ENCODE measurements at regions of chr1 and their contacts with region 1.

Region 1: DNA sequence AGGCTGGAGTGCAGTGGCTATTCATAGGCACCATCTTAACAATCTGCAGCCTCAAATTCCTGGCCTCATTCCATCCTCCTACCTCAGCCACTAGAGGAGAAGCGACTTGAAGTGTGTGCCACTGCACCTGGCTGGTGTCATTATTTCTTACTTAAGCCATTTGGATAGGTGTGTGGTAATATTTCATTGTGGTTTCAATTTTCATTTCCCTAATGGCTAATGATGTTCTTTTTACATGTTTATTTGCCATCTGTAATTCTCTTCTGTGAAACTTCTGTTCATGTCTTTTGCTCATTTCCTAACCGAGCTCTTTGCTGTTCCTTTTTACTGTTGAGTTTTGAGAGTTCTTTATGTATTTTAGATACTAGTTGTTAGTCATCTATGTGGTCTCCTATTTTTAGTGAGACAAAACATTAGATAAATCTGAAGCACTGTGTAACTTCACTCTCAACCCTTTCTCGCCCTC is 66.8 kb downstream of the SLC27A3 start:
- DNase-seq: no peak
- ATAC-seq: no peak
- H3K4me3 ChIP-seq: no peak overlapping the region
- H3K4me3 Mint-ChIP-seq: no peak overlapping the region
- H3K27ac ChIP-seq: no peak overlapping the region
- H3K27ac Mint-ChIP-seq: peak overlapping the region; percentile 10 to 40
- H3K4me1 ChIP-seq: no peaks in the 10 kb centered on the region
- H3K4me1 Mint-ChIP-seq: peaks cover 12 to 32% (median 32%) of the 10 kb centered on the region in 3 donors
- H3K27me3 ChIP-seq: no peaks in the 10 kb centered on the region
- H3K27me3 Mint-ChIP-seq: no peaks in the 10 kb centered on the region

Region 2: GRCh38 chr1:153578471-153578870 is 263.6 kb before region 1 on chr1:
- CTCF ChIA-PET with region 1: no interaction called
- POLR2A ChIA-PET with region 1: interaction called in 1 of 2 experiments, 13 read pairs
- DNase-seq: no peak
- ATAC-seq: no peak
- H3K4me3 ChIP-seq: no peak overlapping the region
- H3K4me3 Mint-ChIP-seq: no peak overlapping the region
- H3K27ac ChIP-seq: no peak overlapping the region
- H3K27ac Mint-ChIP-seq: no peak overlapping the region
- H3K4me1 ChIP-seq: no peaks in the 10 kb centered on the region
- H3K4me1 Mint-ChIP-seq: no peaks in the 10 kb centered on the region
- H3K27me3 ChIP-seq: peaks cover 0 to 28% of the 10 kb centered on the region in 2 experiments
- H3K27me3 Mint-ChIP-seq: peaks cover 21 to 29% of the 10 kb centered on the region in 2 donors

Region 3: DNA sequence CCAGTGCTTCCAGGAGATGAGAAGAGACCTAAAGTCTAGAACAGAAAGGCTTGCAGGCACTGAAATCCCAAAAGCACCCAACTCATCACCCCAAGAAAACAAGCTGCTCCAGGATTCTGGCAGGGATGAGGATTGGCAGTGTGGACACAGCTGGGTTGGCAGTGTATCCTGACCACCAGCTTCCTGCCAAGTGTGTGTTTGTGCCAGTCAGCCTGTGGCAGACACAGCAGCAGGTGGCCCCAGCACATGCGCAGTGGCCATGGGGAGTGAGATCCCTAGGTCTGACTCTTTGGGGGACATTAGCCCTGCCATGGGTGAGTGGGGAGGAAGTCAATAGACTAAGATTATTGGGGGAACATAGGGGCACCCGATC is 192.2 kb before region 1 on chr1:
- CTCF ChIA-PET with region 1: no interaction called
- POLR2A ChIA-PET with region 1: no interaction called
- DNase-seq: peak in 3 of 35 experiments; percentile 20 to 25 (median 25)
- ATAC-seq: peak; percentile 26 to 60 (median 46)
- H3K4me3 ChIP-seq: peak overlapping the region; percentile 1 to 29
- H3K4me3 Mint-ChIP-seq: peak overlapping the region; percentile 43 to 68 (median 50)
- H3K27ac ChIP-seq: peak overlapping the region; percentile 63
- H3K27ac Mint-ChIP-seq: peak overlapping the region; percentile 95 to 96
- H3K4me1 ChIP-seq: peaks cover 25 to 46% of the 10 kb centered on the region in 2 experiments
- H3K4me1 Mint-ChIP-seq: peaks cover 43 to 52% (median 51%) of the 10 kb centered on the region in 3 donors
- H3K27me3 ChIP-seq: no peaks in the 10 kb centered on the region
- H3K27me3 Mint-ChIP-seq: no peaks in the 10 kb centered on the region

Region 4: DNA sequence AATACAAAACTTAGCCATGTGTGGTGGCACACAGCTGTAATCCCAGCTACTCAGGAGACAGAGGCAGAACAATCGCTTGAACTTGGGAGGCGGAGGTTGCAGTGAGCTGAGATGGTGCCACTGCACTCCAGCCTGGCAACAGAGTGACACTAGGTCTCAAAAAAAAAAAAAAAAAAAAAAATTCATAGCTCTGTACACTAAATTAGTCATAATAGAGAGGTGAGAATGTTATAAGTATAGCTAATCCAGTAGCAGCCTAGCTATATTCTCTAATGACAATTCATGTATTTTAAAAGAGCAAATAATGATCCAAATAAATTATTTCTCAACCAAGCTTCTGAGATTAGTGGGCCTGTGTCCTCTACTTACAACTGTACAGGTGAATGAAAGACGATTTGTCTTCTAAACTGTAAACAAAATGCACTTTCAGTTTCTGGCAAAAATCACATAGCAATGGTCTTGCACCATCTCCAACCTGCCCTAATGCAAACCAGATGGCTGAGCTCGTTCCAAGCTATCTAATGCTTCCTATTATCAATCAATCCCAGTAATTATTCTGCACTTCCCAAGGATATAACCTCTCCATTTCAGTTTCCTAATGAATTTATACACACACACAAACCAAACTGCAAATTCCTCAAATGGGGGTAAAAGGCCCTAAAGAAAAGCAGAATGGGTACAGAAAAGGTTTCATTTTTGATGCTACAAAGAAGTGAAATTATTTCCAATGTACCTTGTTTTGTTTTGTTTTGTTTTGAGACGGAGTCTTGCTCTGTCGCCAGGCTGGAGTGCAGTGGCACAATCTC is 24.2 kb after region 1 on chr1:
- CTCF ChIA-PET with region 1: no interaction called
- POLR2A ChIA-PET with region 1: interaction called in 1 of 2 experiments, 10 read pairs
- DNase-seq: no peak
- ATAC-seq: no peak
- H3K4me3 ChIP-seq: no peak overlapping the region
- H3K4me3 Mint-ChIP-seq: no peak overlapping the region
- H3K27ac ChIP-seq: no peak overlapping the region
- H3K27ac Mint-ChIP-seq: peak overlapping the region; percentile 32 to 68
- H3K4me1 ChIP-seq: peaks cover 4 to 20% of the 10 kb centered on the region in 2 experiments
- H3K4me1 Mint-ChIP-seq: peaks cover 35 to 46% (median 46%) of the 10 kb centered on the region in 3 donors
- H3K27me3 ChIP-seq: no peaks in the 10 kb centered on the region
- H3K27me3 Mint-ChIP-seq: no peaks in the 10 kb centered on the region

Region 5: GRCh38 chr1:153922076-153922971 is 80.3 kb after region 1 on chr1:
- CTCF ChIA-PET with region 1: no interaction called
- POLR2A ChIA-PET with region 1: no interaction called
- DNase-seq: peak in 22 of 35 experiments; percentile 8 to 59 (median 40)
- ATAC-seq: peak; percentile 0 to 37 (median 28)
- H3K4me3 ChIP-seq: peak overlapping the region; percentile 69 to 75
- H3K4me3 Mint-ChIP-seq: peak overlapping the region; percentile 91 to 96 (median 94)
- H3K27ac ChIP-seq: peak overlapping the region; percentile 68
- H3K27ac Mint-ChIP-seq: peak overlapping the region; percentile 95 to 97
- H3K4me1 ChIP-seq: peaks cover 33 to 39% of the 10 kb centered on the region in 2 experiments
- H3K4me1 Mint-ChIP-seq: peaks cover 43 to 58% (median 56%) of the 10 kb centered on the region in 3 donors
- H3K27me3 ChIP-seq: no peaks in the 10 kb centered on the region
- H3K27me3 Mint-ChIP-seq: peaks cover 0 to 1% of the 10 kb centered on the region in 2 donors